ENCODE measurements at regions of chr15 and their contacts with region 1.

Region 1: GRCh38 chr15:101251830-101252820 is at the start of gene CHSY1:
- DNase-seq: peak; percentile 95
- H3K4me3 ChIP-seq: peak within 1 kb of the TSS; percentile 78 to 82
- H3K27ac ChIP-seq: peak within 1 kb of the TSS; percentile 90 to 92
- H3K4me1 ChIP-seq: peaks cover 37% of the 10 kb centered on the region
- H3K27me3 ChIP-seq: no peaks in the 10 kb centered on the region
- CTCF ChIP-seq: peak in 1 of 3 experiments; percentile 33
- POLR2A ChIP-seq: peak; percentile 66
- total RNA-seq, gene CHSY1: 31.1 to 36.1 TPM

Region 2: GRCh38 chr15:101014921-101015841 is 236.9 kb before region 1 on chr15:
- intact Hi-C with region 1: loop called (anchors 5 kb)
- DNase-seq: peak; percentile 87
- H3K4me3 ChIP-seq: no peak overlapping the region
- H3K27ac ChIP-seq: peak overlapping the region in 1 of 2 donors; percentile 11
- H3K4me1 ChIP-seq: peaks cover 23% of the 10 kb centered on the region
- H3K27me3 ChIP-seq: no peaks in the 10 kb centered on the region
- CTCF ChIP-seq: peak; percentile 80 to 93 (median 87)
- POLR2A ChIP-seq: no peak

Region 3: DNA sequence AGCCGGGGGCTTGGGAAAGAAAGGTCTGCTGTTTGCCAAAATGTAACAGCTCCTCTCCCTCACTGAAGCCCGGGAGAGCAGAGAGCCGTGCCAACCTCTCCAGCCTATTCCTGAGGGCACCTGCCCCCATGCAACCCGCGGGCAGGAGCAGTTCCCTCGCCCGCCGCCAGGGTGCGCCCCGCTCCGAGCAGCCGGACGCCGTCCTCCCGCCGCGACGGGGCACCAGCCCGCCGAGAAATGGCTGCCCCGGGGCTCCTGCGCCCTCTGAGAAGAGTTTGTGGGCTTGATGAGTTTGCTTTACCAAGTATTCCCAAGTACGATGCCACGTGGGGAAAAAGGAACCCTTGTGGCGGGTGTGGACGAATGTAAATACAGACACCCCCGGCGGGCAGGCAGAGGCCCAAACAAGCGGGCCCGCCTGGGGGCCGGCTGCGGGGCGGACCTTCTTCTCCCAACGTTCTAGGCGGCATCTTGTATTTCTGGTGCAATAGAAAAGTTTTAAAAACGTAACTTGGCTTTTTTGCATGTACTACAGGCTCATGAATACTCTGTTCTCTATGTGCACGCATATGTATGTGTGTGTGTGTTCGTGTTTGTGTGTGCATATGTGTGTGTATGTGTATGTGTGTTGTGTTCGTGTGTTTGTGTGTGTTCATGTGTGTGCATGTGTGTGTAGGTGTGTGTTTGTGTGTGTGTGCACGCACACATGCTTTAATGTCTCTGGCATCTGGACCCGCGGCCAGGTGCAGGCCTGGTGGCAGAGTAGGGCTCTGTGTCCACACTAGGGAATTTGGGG is 163.1 kb before region 1 on chr15:
- intact Hi-C with region 1: loop called (anchors 10 kb)
- DNase-seq: peak; percentile 82
- H3K4me3 ChIP-seq: peak overlapping the region; percentile 27 to 41
- H3K27ac ChIP-seq: peak overlapping the region; percentile 22 to 75
- H3K4me1 ChIP-seq: peaks cover 49% of the 10 kb centered on the region
- H3K27me3 ChIP-seq: no peaks in the 10 kb centered on the region
- CTCF ChIP-seq: peak; percentile 98 to 100 (median 99)
- POLR2A ChIP-seq: no peak

Region 4: DNA sequence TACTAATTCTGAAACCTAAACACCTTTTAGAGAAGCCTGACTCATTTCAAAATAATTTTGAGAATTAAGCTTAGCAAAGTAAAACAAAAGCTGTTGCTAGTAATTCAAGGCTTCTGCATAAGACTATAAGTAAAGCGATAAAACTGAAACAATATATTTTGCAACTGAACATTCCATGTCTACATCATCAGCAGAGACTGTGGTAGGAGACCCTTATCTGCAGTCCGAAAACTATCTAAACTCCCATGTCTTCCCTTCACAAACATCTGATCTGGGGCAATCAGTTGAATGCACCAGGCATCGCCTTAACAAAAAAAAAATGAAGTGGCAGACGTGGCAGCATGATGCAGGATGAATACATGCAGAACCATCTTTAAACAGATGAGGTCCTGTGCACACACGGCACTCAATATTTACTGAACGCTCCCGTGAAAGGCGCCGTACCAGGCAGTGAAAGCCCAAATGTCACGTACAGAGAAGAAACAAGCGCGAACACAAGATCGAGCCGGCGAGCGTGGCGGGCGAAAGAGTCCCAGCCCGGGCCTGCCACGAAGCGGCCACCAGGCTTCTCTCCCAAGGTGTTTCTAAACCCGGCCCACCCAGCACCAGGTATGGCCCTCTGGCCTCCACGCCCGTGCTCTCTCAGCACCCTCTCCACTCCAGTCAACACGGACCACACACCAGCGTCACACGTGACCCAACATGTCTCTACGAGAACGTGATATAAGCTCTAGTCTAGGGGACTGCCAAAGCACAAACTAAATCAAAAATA is 63.3 kb before region 1 on chr15:
- intact Hi-C with region 1: loop called (anchors 5 kb)
- DNase-seq: peak; percentile 76
- H3K4me3 ChIP-seq: peak overlapping the region; percentile 13 to 42
- H3K27ac ChIP-seq: peak overlapping the region; percentile 61 to 87
- H3K4me1 ChIP-seq: peaks cover 45% of the 10 kb centered on the region
- H3K27me3 ChIP-seq: no peaks in the 10 kb centered on the region
- CTCF ChIP-seq: no peak
- POLR2A ChIP-seq: no peak

Measured in testis (tissue), 5 donors.